ENCODE measurements at regions of chrX and their contacts with region 1.

Region 1: DNA sequence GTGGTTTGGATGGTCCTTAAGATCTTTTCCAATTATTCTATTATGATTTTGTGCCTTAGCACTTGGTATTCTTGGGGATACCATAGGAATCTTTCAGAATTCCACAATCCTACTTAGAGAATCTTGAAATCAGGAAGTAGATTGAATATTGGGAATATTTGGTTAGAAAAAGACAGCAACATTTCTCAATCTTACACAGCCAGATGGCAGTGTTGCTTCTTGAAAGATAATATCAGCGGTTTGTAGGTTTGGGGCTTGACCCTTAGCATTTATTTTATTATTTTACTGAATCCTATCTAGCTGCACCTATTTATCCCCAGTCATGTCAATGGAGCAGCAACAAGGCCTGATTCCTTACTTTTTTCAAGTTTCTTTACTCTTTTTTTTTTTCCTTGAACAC is 28.6 kb downstream of the MAGEB1 start:
- DNase-seq: no peak
- H3K4me3 Mint-ChIP-seq: no peak overlapping the region
- H3K27ac Mint-ChIP-seq: no peak overlapping the region
- H3K4me1 Mint-ChIP-seq: peaks cover 11% of the 10 kb centered on the region
- H3K27me3 Mint-ChIP-seq: no peaks in the 10 kb centered on the region
- CTCF ChIP-seq: no peak

Region 2: GRCh38 chrX:30248854-30249253 is 26.6 kb before region 1 on chrX:
- CTCF ChIA-PET with region 1: no interaction called
- intact Hi-C with region 1: no loop called
- DNase-seq: no peak
- H3K4me3 Mint-ChIP-seq: no peak overlapping the region
- H3K27ac Mint-ChIP-seq: no peak overlapping the region
- H3K4me1 Mint-ChIP-seq: no peaks in the 10 kb centered on the region
- H3K27me3 Mint-ChIP-seq: no peaks in the 10 kb centered on the region
- CTCF ChIP-seq: no peak

Region 3: DNA sequence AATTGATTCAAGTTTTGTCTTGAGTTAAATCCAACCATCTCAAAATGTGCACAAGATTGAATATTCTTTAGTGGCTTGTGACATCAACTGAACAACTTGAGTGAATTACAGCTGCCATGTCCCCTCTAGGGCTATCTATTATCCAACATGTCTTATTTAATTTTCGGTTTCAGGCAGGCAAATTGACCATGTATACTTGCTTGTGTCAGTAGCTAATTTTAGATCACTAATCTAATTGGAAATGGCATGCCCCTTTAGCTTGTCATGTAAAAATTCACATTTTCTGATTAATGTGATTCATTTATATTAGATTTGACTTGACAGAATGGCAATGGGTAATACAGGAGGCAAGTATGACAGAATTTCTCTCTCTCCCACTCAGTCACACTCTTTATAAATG is 126.9 kb after region 1 on chrX:
- CTCF ChIA-PET with region 1: no interaction called
- intact Hi-C with region 1: no loop called
- DNase-seq: no peak
- H3K4me3 Mint-ChIP-seq: no peak overlapping the region
- H3K27ac Mint-ChIP-seq: no peak overlapping the region
- H3K4me1 Mint-ChIP-seq: no peaks in the 10 kb centered on the region
- H3K27me3 Mint-ChIP-seq: no peaks in the 10 kb centered on the region
- CTCF ChIP-seq: no peak

Region 4: DNA sequence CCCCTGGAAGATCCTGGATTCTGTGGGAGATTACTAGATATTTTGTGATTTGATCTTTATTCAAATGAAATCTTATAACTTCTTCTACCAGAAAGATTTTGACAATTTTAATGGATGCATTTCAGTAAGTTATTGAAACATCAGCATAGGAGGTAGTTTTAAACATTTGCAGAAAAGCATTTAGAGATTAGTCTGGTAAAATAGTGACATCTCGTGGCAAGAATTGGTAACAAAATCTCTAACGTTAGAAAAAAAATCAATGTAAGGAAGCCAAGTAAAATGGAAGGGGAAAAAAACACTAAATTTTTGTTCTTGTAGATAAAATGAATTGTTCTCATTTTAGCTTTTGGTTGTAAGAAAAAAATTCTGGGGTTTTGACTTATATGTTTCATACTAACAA is 228.8 kb after region 1 on chrX:
- CTCF ChIA-PET with region 1: no interaction called
- intact Hi-C with region 1: loop called (anchors 1 kb)
- DNase-seq: no peak
- H3K4me3 Mint-ChIP-seq: no peak overlapping the region
- H3K27ac Mint-ChIP-seq: no peak overlapping the region
- H3K4me1 Mint-ChIP-seq: no peaks in the 10 kb centered on the region
- H3K27me3 Mint-ChIP-seq: no peaks in the 10 kb centered on the region
- CTCF ChIP-seq: no peak

Measured in Calu3 (cell line).